Endothelial cell of umbilical vein (primary cell): ENCODE measurements at regions of chr6 and their contacts with region 1.

Region 1: DNA sequence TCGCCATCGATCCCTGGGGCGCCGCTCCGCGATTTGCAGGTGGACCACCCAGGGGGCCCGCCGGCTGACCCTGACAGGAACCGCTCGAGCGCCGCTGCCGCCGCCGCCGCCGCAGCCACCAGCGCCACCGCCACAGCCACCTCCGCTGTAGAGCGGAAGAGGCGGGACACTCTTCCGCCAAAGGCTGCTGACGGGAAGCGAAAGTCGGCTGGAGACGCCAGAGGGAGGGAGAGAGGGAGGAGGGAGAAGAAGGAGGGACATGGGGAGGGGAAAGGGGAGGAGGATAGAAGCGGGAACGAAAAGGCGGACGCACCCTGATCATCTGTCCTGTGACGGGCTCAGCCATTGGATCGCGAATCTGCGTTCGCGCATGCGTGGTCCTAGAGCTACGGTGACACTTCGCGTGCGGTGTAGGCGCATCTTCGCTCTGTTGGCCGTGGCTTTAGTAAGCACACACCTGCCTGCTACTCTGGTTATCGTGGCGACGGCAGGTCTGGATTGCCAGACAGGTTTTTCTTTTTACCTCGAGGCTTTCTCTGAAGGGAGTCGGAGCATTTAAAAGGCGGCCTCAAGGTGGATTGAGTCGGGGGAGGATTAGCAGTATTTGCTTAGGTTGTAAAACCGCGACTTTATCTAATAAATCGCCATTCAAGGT is at the start of gene TMEM30A:
- DNase-seq: peak; percentile 99
- H3K4me3 ChIP-seq: peak within 1 kb of the TSS; percentile 91 to 95 (median 94)
- H3K27ac ChIP-seq: peak within 1 kb of the TSS; percentile 84
- H3K4me1 ChIP-seq: peaks cover 27% of the 10 kb centered on the region
- H3K27me3 ChIP-seq: no peaks in the 10 kb centered on the region
- CTCF ChIP-seq: no peak
- POLR2A ChIP-seq: peak; percentile 95
- total RNA-seq, gene TMEM30A: 197 and 213 TPM in 2 replicates

Region 2: GRCh38 chr6:75243333-75244062 is 41.3 kb before region 1 on chr6 and contains the start of gene COX7A2:
- CTCF ChIA-PET with region 1: interaction called, 5 read pairs
- POLR2A ChIA-PET with region 1: interaction called, 3 read pairs
- dilution Hi-C with region 1: no loop called
- intact Hi-C with region 1: loop called (anchors 2 kb)
- DNase-seq: peak; percentile 98
- H3K4me3 ChIP-seq: peak within 1 kb of the TSS; percentile 75 to 98 (median 90)
- H3K27ac ChIP-seq: peak within 1 kb of the TSS; percentile 90
- H3K4me1 ChIP-seq: peaks cover 4% of the 10 kb centered on the region
- H3K27me3 ChIP-seq: no peaks in the 10 kb centered on the region
- CTCF ChIP-seq: no peak
- POLR2A ChIP-seq: peak; percentile 89
- total RNA-seq, gene COX7A2: 426 and 455 TPM in 2 replicates

Region 3: GRCh38 chr6:75266716-75267291 is 18.0 kb before region 1 on chr6:
- CTCF ChIA-PET with region 1: interaction called, 95 read pairs
- POLR2A ChIA-PET with region 1: interaction called, 3 read pairs
- dilution Hi-C with region 1: no loop called
- intact Hi-C with region 1: loop called (anchors 1 kb)
- DNase-seq: peak; percentile 75
- H3K4me3 ChIP-seq: no peak overlapping the region
- H3K27ac ChIP-seq: no peak overlapping the region
- H3K4me1 ChIP-seq: peaks cover 19% of the 10 kb centered on the region
- H3K27me3 ChIP-seq: no peaks in the 10 kb centered on the region
- CTCF ChIP-seq: peak; percentile 58 to 59
- POLR2A ChIP-seq: no peak